ENCODE measurements at regions of chr7 and their contacts with region 1.

Region 1: GRCh38 chr7:140230861-140231770 is 54.3 kb upstream of the KDM7A start:
- DNase-seq: peak; percentile 86
- ATAC-seq: peak; percentile 65
- H3K4me3 Mint-ChIP-seq: peak overlapping the region; percentile 99
- H3K27ac Mint-ChIP-seq: peak overlapping the region; percentile 99
- H3K4me1 Mint-ChIP-seq: peaks cover 45% of the 10 kb centered on the region
- H3K27me3 Mint-ChIP-seq: no peaks in the 10 kb centered on the region

Region 2: DNA sequence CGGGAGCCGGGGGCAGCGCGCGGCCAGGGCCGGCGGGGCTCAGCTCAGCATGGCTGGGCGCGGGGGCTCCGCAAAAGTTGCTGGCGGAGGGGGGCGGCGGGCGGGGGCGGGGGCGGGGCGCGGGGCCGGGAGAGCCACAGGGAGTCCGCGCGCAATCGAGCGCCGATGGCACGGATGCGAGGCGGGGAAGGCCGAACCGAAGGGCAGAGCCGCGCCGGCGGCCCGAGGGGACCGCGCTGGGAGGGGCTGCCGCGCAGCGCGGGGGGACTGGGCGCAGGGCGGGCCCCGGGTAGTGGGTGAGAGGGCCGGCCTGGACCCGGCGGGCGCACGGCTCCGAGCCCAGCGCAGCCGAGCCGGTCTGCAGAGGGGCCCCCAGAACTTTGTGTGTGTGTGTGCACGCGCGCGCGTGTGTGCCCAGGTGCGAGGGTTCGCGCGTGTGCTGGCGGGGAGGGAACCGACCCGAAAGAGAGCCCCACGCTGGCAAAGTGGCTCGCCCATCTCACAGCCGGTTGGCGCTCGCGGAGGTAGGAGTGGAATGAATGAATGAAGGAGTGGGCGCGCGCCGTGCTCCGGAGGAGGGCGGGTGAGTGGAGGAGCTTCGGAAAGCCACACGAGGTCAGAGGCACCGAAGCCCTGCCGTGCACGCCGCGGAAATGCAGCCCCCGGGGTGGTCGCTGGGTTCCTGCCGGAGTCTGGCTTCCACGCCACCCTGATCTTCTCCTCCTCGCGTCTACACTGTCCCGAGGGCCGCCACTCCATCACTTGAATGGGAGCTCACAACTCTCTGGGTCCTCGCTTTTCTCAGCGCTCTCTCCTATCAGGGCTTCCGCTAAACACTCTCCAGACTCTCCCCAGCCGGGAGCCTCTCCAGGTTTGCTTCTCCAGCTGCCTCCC is 452.9 kb before region 1 on chr7 and contains the start of gene HIPK2:
- CTCF ChIA-PET with region 1: no interaction called
- POLR2A ChIA-PET with region 1: no interaction called
- intact Hi-C with region 1: loop called in 1 of 2 experiments (anchors 5 kb)
- DNase-seq: peak; percentile 82
- ATAC-seq: peak; percentile 37
- H3K4me3 Mint-ChIP-seq: peak within 1 kb of the TSS; percentile 83
- H3K27ac Mint-ChIP-seq: peak within 1 kb of the TSS; percentile 93
- H3K4me1 Mint-ChIP-seq: peaks cover 41% of the 10 kb centered on the region
- H3K27me3 Mint-ChIP-seq: peaks cover 11% of the 10 kb centered on the region
- total RNA-seq, gene HIPK2: 23.9 to 36.2 TPM

Region 3: GRCh38 chr7:140209866-140210609 is 21.1 kb before region 1 on chr7:
- CTCF ChIA-PET with region 1: interaction called, 3 read pairs
- POLR2A ChIA-PET with region 1: interaction called, 3 read pairs
- intact Hi-C with region 1: loop called (anchors 1 kb)
- DNase-seq: peak; percentile 83
- ATAC-seq: peak; percentile 62
- H3K4me3 Mint-ChIP-seq: peak overlapping the region; percentile 2
- H3K27ac Mint-ChIP-seq: peak overlapping the region; percentile 88
- H3K4me1 Mint-ChIP-seq: peaks cover 80% of the 10 kb centered on the region
- H3K27me3 Mint-ChIP-seq: no peaks in the 10 kb centered on the region

Region 4: GRCh38 chr7:140269004-140269638 is 38.0 kb after region 1 on chr7:
- CTCF ChIA-PET with region 1: no interaction called
- POLR2A ChIA-PET with region 1: no interaction called
- intact Hi-C with region 1: no loop called
- DNase-seq: no peak
- ATAC-seq: no peak
- H3K4me3 Mint-ChIP-seq: no peak overlapping the region
- H3K27ac Mint-ChIP-seq: peak overlapping the region; percentile 31
- H3K4me1 Mint-ChIP-seq: peaks cover 19% of the 10 kb centered on the region
- H3K27me3 Mint-ChIP-seq: no peaks in the 10 kb centered on the region

Region 5: GRCh38 chr7:140304191-140304799 is 73.2 kb after region 1 on chr7:
- CTCF ChIA-PET with region 1: no interaction called
- POLR2A ChIA-PET with region 1: no interaction called
- intact Hi-C with region 1: loop called in 1 of 2 experiments (anchors 1 kb)
- DNase-seq: peak; percentile 56
- ATAC-seq: peak; percentile 95
- H3K4me3 Mint-ChIP-seq: no peak overlapping the region
- H3K27ac Mint-ChIP-seq: peak overlapping the region; percentile 83
- H3K4me1 Mint-ChIP-seq: peaks cover 16% of the 10 kb centered on the region
- H3K27me3 Mint-ChIP-seq: no peaks in the 10 kb centered on the region

Region 6: GRCh38 chr7:140334341-140335057 is 103.4 kb after region 1 on chr7:
- CTCF ChIA-PET with region 1: no interaction called
- POLR2A ChIA-PET with region 1: no interaction called
- intact Hi-C with region 1: no loop called
- DNase-seq: no peak
- ATAC-seq: no peak
- H3K4me3 Mint-ChIP-seq: no peak overlapping the region
- H3K27ac Mint-ChIP-seq: no peak overlapping the region
- H3K4me1 Mint-ChIP-seq: no peaks in the 10 kb centered on the region
- H3K27me3 Mint-ChIP-seq: no peaks in the 10 kb centered on the region

Region 7: GRCh38 chr7:140403878-140404564 is 172.9 kb after region 1 on chr7 and contains the start of gene RAB19:
- CTCF ChIA-PET with region 1: no interaction called
- POLR2A ChIA-PET with region 1: no interaction called
- intact Hi-C with region 1: loop called in 1 of 2 experiments (anchors 5 kb)
- DNase-seq: peak; percentile 63
- ATAC-seq: peak; percentile 77
- H3K4me3 Mint-ChIP-seq: peak within 1 kb of the TSS; percentile 90
- H3K27ac Mint-ChIP-seq: peak within 1 kb of the TSS; percentile 97
- H3K4me1 Mint-ChIP-seq: peaks cover 35% of the 10 kb centered on the region
- H3K27me3 Mint-ChIP-seq: no peaks in the 10 kb centered on the region
- total RNA-seq, gene RAB19: 11.3 to 12.8 TPM